ENCODE measurements at regions of chr2 and their contacts with region 1.

Region 1: DNA sequence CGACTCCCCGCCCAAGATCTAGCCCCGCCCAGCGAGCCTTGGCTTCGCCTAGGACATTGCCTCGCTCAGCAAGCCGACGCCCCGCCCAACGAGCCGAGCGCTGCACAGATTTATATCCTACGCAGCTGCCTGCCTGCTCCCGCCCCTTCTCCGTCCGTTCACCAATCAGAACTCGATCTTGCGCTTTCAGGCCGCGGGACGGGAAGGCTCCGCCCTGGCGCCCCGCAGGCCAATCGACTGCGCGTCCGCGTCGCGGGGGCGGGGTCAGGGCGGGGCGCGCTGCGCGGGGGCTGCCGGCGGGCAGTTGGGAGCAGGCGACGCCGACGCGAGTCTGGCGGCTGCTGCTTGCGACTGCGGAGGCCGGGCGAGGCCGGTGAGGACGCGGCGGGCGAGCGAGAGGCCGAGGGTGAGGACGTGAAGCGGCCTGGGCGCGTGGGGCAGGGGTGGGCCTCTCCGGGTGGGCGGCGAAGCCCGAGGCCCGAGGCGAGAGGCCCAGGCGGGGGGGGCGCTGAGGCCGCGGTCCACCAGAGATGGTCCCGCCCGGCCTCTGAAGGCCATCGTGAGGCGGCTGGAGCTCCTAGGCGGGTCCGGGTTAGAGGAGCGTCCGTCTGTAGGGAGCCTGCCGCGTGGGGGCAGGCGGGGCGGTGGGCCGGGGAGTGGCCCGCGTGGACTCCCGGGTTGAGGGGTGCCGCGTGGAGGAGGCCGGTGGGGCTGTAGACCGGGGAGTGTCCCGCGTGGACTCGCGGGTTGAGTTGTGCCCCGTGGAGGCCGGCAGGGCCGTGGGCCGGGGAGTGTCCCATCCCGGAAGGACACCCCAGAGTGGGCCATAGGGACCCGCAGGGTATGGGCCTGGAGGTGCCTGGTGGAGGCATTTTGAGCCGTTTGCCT is at the start of gene FARP2:
- DNase-seq: peak; percentile 98
- H3K4me3 ChIP-seq: peak within 1 kb of the TSS; percentile 98
- H3K27ac ChIP-seq: peak within 1 kb of the TSS; percentile 30
- H3K4me1 ChIP-seq: peaks cover 33% of the 10 kb centered on the region
- CTCF ChIP-seq: no peak
- total RNA-seq, gene FARP2: 23.2 and 33.6 TPM in 2 replicates

Region 2: GRCh38 chr2:239873656-239874635 is 1482.3 kb before region 1 on chr2:
- CTCF ChIA-PET with region 1: no interaction called
- POLR2A ChIA-PET with region 1: no interaction called
- intact Hi-C with region 1: no loop called
- DNase-seq: no peak
- H3K4me3 ChIP-seq: no peak overlapping the region
- H3K27ac ChIP-seq: no peak overlapping the region
- H3K4me1 ChIP-seq: peaks cover 10% of the 10 kb centered on the region
- CTCF ChIP-seq: no peak

Region 3: GRCh38 chr2:241344925-241345651 is 11.1 kb before region 1 on chr2:
- CTCF ChIA-PET with region 1: no interaction called
- POLR2A ChIA-PET with region 1: no interaction called
- intact Hi-C with region 1: no loop called
- DNase-seq: no peak
- H3K4me3 ChIP-seq: no peak overlapping the region
- H3K27ac ChIP-seq: no peak overlapping the region
- H3K4me1 ChIP-seq: peaks cover 14% of the 10 kb centered on the region
- CTCF ChIP-seq: no peak

Region 4: GRCh38 chr2:241372361-241372992 is 16.2 kb after region 1 on chr2:
- CTCF ChIA-PET with region 1: interaction called, 4 read pairs
- POLR2A ChIA-PET with region 1: interaction called, 15 read pairs
- intact Hi-C with region 1: no loop called
- DNase-seq: no peak
- H3K4me3 ChIP-seq: no peak overlapping the region
- H3K27ac ChIP-seq: peak overlapping the region; percentile 73
- H3K4me1 ChIP-seq: peaks cover 75% of the 10 kb centered on the region
- CTCF ChIP-seq: no peak

Region 5: GRCh38 chr2:241391892-241392665 is 35.9 kb after region 1 on chr2:
- CTCF ChIA-PET with region 1: no interaction called
- POLR2A ChIA-PET with region 1: interaction called, 5 read pairs
- intact Hi-C with region 1: loop called (anchors 2 kb)
- DNase-seq: peak; percentile 65
- H3K4me3 ChIP-seq: no peak overlapping the region
- H3K27ac ChIP-seq: no peak overlapping the region
- H3K4me1 ChIP-seq: peaks cover 13% of the 10 kb centered on the region
- CTCF ChIP-seq: peak; percentile 82

Region 6: GRCh38 chr2:241637000-241637791 is 281.0 kb after region 1 on chr2 and contains the starts of genes ATG4B and THAP4:
- CTCF ChIA-PET with region 1: no interaction called
- POLR2A ChIA-PET with region 1: no interaction called
- intact Hi-C with region 1: loop called (anchors 10 kb)
- DNase-seq: peak; percentile 89
- H3K4me3 ChIP-seq: peak within 1 kb of the TSS; percentile 89
- H3K27ac ChIP-seq: peak within 1 kb of the TSS; percentile 75
- H3K4me1 ChIP-seq: peaks cover 24% of the 10 kb centered on the region
- CTCF ChIP-seq: no peak
- total RNA-seq, gene ATG4B: 72.4 and 78.0 TPM in 2 replicates
- total RNA-seq, gene THAP4: 55.4 and 65.6 TPM in 2 replicates

Region 7: GRCh38 chr2:241877989-241878970 is 522.1 kb after region 1 on chr2:
- CTCF ChIA-PET with region 1: no interaction called
- POLR2A ChIA-PET with region 1: no interaction called
- intact Hi-C with region 1: loop called (anchors 1 kb)
- DNase-seq: peak; percentile 65
- H3K4me3 ChIP-seq: no peak overlapping the region
- H3K27ac ChIP-seq: no peak overlapping the region
- H3K4me1 ChIP-seq: peaks cover 23% of the 10 kb centered on the region
- CTCF ChIP-seq: peak; percentile 70